ENCODE measurements at regions of chr6 and their contacts with region 1.

Region 1: DNA sequence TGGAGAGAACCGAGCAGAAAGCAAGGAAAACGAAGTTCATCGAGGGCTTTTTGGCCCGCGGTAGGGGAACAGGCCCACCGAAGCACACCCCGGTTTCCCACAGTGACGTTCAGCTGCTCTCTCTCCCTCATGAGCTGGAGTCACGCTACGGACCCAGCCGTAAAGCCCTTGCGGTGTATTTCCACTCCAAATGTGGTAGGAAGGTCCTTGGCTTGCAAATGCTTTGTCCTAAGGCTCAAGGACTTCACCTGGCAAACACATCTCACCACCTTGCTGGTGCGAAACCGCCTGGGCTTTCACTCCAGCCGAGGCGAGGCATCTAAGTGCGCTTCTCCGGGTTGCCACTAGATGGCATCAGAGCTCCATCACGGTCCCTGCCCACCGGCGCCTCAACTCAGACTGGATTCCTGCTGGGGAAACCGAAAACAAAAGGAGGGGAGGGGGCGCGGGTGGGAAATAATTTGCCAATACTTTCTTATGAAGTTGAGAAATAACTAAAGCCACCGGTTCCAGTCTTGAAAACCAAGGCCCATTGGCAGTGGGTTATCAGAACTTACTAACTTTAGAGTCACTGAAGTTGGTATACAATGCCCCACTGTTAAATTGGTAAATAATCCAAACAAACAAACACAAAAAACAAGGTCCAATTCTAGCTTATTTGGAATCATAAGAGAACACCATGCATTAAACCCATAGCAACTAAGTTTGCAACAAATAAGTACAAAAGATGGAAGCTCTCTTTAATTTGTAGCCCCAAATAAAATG is 13.4 kb upstream of the FOXC1 start:
- DNase-seq: peak; percentile 43 to 71 (median 60)
- H3K4me3 ChIP-seq: no peak overlapping the region
- H3K27ac ChIP-seq: no peak overlapping the region
- H3K4me1 ChIP-seq: no peaks in the 10 kb centered on the region
- H3K27me3 ChIP-seq: no peaks in the 10 kb centered on the region
- CTCF ChIP-seq: peak; percentile 79 to 84 (median 81)
- EP300 ChIP-seq: no peak
- POLR2A ChIP-seq: no peak

Region 2: GRCh38 chr6:2196079-2196679 is 599.9 kb after region 1 on chr6:
- intact Hi-C with region 1: loop called in 3 of 4 experiments (anchors 5 kb)
- DNase-seq: peak in 1 of 5 donors; percentile 36
- H3K4me3 ChIP-seq: no peak overlapping the region
- H3K27ac ChIP-seq: no peak overlapping the region
- H3K4me1 ChIP-seq: no peaks in the 10 kb centered on the region
- H3K27me3 ChIP-seq: no peaks in the 10 kb centered on the region
- CTCF ChIP-seq: peak in 2 of 3 donors; percentile 60 to 65
- EP300 ChIP-seq: no peak
- POLR2A ChIP-seq: no peak

Region 3: DNA sequence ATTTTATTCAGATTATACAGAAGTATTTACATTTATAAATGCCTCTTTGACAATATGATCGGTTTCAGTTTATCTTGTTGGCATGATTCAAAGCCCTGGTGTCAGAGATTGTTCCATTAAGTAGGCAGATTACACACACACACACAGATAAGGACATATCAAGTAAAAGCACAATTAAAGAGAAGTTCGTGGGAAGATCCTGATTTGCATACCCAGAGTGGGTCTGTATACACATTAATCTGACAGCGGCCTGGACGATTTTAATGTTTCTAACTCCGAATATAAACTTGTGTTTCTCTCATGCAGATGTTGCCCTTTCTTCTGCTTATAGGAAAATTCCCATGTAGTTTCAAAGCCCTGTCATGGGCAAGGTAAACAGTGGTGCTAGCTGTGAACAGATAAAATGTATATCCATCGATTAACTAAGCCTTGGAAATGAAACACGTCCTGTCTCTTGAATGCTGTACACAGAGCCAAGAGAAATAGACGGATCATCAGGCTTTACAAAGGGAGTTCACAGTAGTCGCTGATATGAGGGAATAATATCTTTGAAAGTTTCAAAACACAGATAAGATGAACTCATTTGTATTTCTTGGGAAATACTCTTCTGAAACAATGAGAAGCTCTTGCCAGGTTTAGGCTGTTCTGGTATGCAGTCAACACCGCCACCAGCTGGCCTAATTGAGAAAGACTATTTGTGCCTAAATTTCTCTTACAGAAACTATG is 757.3 kb after region 1 on chr6:
- intact Hi-C with region 1: loop called in 3 of 4 experiments (anchors 5 to 10 kb)
- DNase-seq: peak; percentile 41 to 75 (median 63)
- H3K4me3 ChIP-seq: no peak overlapping the region
- H3K27ac ChIP-seq: no peak overlapping the region
- H3K4me1 ChIP-seq: peaks cover 5% of the 10 kb centered on the region
- H3K27me3 ChIP-seq: no peaks in the 10 kb centered on the region
- CTCF ChIP-seq: peak; percentile 50 to 70 (median 69)
- EP300 ChIP-seq: no peak
- POLR2A ChIP-seq: no peak

Region 4: GRCh38 chr6:2634139-2634964 is 1038.1 kb after region 1 on chr6:
- intact Hi-C with region 1: loop called (anchors 5 kb)
- DNase-seq: peak; percentile 82 to 91 (median 88)
- H3K4me3 ChIP-seq: peak overlapping the region; percentile 41
- H3K27ac ChIP-seq: peak overlapping the region; percentile 15 to 34
- H3K4me1 ChIP-seq: peaks cover 5% of the 10 kb centered on the region
- H3K27me3 ChIP-seq: no peaks in the 10 kb centered on the region
- CTCF ChIP-seq: peak; percentile 91 to 99 (median 96)
- EP300 ChIP-seq: no peak
- POLR2A ChIP-seq: no peak

Region 5: GRCh38 chr6:2639896-2640295 is 1043.6 kb after region 1 on chr6:
- intact Hi-C with region 1: loop called in 1 of 4 experiments (anchors 5 kb)
- DNase-seq: no peak
- H3K4me3 ChIP-seq: no peak overlapping the region
- H3K27ac ChIP-seq: no peak overlapping the region
- H3K4me1 ChIP-seq: no peaks in the 10 kb centered on the region
- H3K27me3 ChIP-seq: no peaks in the 10 kb centered on the region
- CTCF ChIP-seq: no peak
- EP300 ChIP-seq: no peak
- POLR2A ChIP-seq: no peak

Region 6: DNA sequence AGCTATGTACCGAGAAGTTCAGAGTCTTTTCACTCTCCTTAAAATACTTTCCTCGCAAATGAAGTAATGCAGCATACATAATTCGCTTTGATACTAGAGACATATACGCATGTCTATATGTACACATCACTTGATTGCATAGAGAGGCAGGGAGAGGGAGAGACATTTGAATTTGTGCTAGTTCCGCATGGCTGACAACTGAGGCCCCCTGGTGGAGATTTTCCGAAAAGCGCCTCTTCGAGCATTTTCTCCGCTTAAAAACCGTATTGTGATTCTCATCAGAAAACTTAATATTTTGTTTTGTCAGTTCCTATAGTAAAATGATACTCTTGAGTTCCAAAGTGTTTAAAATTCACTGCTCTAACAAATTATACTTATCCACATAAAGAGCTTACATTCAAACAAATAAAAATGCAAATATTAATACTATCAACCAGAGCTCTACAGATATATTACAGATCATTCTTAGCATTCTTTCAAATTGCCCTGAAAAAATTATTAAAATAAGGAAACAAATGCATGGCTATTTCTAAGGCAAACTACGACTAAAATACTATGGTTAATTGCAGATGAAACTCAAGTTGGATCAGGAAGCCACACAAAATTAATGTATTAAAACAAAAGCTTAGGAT is 1153.8 kb after region 1 on chr6:
- intact Hi-C with region 1: loop called in 3 of 4 experiments (anchors 5 to 10 kb)
- DNase-seq: peak in 4 of 5 donors; percentile 57 to 69 (median 67)
- H3K4me3 ChIP-seq: no peak overlapping the region
- H3K27ac ChIP-seq: no peak overlapping the region
- H3K4me1 ChIP-seq: no peaks in the 10 kb centered on the region
- H3K27me3 ChIP-seq: no peaks in the 10 kb centered on the region
- CTCF ChIP-seq: peak; percentile 56 to 62 (median 60)
- EP300 ChIP-seq: no peak
- POLR2A ChIP-seq: no peak

Measured in ovary (tissue), 10 donors.